ENCODE measurements at regions of chr3 and their contacts with region 1.

Region 1: DNA sequence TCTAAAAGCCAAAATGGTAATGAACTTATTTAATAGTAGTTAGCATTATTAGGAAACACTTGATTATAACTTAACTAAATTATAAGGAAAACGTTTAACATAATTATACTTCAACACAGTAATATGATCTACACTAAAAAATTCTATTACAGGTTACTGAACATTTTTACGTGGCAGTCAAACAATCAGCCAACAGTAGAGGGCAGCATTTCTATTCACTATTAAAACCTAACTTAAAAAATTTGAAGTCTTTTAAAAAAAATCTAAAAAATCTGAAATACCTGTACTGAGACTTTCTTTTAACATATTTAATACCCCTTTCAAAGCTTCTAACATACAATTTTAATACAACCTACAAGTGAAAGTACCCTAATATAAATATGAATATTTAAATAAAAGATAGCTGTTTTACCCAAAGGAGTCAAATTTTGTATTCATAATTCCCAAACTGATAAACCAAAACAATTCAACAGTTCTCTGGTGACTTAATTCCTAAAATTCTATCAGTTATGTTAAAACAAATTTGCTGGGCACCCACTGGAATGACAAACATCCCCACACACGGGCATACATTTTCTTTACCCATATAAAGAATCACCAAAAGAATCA is 41.5 kb downstream of the DLG1 start:
- DNase-seq: peak; percentile 59
- H3K4me3 Mint-ChIP-seq: no peak overlapping the region
- H3K27ac Mint-ChIP-seq: no peak overlapping the region
- H3K4me1 Mint-ChIP-seq: peaks cover 15% of the 10 kb centered on the region
- H3K27me3 Mint-ChIP-seq: no peaks in the 10 kb centered on the region
- CTCF ChIP-seq: peak; percentile 58

Region 2: GRCh38 chr3:197234947-197235914 is 21.7 kb before region 1 on chr3:
- CTCF ChIA-PET with region 1: interaction called, 27 read pairs
- POLR2A ChIA-PET with region 1: interaction called, 4 read pairs
- intact Hi-C with region 1: no loop called
- DNase-seq: peak; percentile 27
- H3K4me3 Mint-ChIP-seq: no peak overlapping the region
- H3K27ac Mint-ChIP-seq: peak overlapping the region; percentile 16
- H3K4me1 Mint-ChIP-seq: peaks cover 26% of the 10 kb centered on the region
- H3K27me3 Mint-ChIP-seq: no peaks in the 10 kb centered on the region
- CTCF ChIP-seq: no peak

Region 3: DNA sequence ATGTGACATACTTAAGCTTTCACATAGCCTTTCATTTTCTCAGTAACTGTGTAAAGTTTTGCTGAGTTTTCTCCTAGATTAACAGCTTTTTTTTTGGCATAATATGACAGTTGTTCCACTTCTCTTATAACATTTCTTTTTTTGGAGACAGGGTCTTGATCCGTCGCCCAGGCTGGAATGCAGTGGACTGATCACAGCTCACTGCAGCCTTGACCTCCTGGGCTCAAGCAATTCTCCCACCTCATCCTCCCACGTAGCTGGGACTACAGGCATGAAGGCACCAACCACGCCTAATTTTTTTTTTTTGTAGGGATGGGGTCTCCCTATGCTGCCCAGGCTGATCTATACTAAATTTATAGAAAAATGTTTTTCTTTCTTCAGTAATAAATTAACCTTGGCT is 11.4 kb after region 1 on chr3:
- CTCF ChIA-PET with region 1: interaction called, 45 read pairs
- POLR2A ChIA-PET with region 1: interaction called, 3 read pairs
- intact Hi-C with region 1: no loop called
- DNase-seq: no peak
- H3K4me3 Mint-ChIP-seq: no peak overlapping the region
- H3K27ac Mint-ChIP-seq: no peak overlapping the region
- H3K4me1 Mint-ChIP-seq: peaks cover 26% of the 10 kb centered on the region
- H3K27me3 Mint-ChIP-seq: no peaks in the 10 kb centered on the region
- CTCF ChIP-seq: no peak

Region 4: DNA sequence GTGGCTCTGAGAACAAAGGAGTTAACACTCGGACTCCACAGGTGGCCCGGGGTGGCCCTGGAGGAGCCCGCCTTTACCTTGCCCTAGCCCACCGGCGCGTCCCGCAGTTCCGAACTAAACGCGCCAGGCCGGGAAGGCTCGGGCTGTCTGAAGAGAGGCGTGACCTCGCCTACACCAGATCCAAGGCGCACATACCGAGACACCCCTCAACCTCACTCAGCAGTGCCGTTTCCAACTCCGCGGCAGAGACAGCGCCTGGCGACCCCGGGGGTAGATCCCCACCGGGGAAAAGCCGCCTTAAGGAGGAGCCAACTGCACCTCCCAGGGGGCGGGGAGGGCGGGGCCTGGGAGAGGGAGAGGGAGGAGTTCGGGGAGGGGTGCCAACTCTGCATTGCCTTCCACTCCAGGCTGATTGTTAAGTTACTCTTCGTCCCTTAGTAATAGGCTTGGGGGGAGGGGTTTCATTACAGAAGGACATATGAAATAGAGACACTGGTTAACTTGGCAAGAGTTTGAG is 41.5 kb after region 1 on chr3 and contains the start of gene DLG1:
- CTCF ChIA-PET with region 1: interaction called, 9 read pairs
- POLR2A ChIA-PET with region 1: interaction called, 11 read pairs
- intact Hi-C with region 1: no loop called
- DNase-seq: peak; percentile 98
- H3K4me3 Mint-ChIP-seq: peak within 1 kb of the TSS; percentile 94
- H3K27ac Mint-ChIP-seq: peak within 1 kb of the TSS; percentile 97
- H3K4me1 Mint-ChIP-seq: peaks cover 14% of the 10 kb centered on the region
- H3K27me3 Mint-ChIP-seq: no peaks in the 10 kb centered on the region
- CTCF ChIP-seq: no peak
- total RNA-seq, gene DLG1: 121 and 129 TPM in 2 replicates

Region 5: GRCh38 chr3:197456261-197457091 is 199.5 kb after region 1 on chr3:
- CTCF ChIA-PET with region 1: interaction called, 11 read pairs
- POLR2A ChIA-PET with region 1: interaction called, 8 read pairs
- intact Hi-C with region 1: loop called (anchors 1 kb)
- DNase-seq: peak; percentile 85
- H3K4me3 Mint-ChIP-seq: peak overlapping the region; percentile 72
- H3K27ac Mint-ChIP-seq: peak overlapping the region; percentile 91
- H3K4me1 Mint-ChIP-seq: peaks cover 11% of the 10 kb centered on the region
- H3K27me3 Mint-ChIP-seq: no peaks in the 10 kb centered on the region
- CTCF ChIP-seq: no peak

Region 6: DNA sequence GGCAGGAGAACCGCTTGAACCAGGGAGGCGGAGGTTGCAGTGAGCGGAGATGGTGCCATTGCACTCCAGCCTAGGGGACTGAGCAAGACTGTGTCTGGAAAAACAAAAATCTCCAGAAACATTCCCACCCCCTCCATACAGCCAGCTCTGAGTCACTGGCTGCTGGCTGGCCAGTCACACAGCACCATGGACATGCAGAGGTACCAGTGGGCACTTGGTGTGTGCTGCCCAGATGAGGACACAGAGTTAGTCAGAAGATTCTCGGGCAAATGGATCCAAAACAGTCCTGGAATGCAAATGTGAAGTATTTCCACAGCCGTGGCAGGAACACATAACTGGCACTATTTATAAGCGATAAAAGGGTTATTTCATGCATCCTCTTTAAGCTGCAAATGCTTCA is 254.2 kb after region 1 on chr3:
- CTCF ChIA-PET with region 1: interaction called, 113 read pairs
- POLR2A ChIA-PET with region 1: interaction called, 4 read pairs
- intact Hi-C with region 1: no loop called
- DNase-seq: peak; percentile 52
- H3K4me3 Mint-ChIP-seq: no peak overlapping the region
- H3K27ac Mint-ChIP-seq: no peak overlapping the region
- H3K4me1 Mint-ChIP-seq: peaks cover 3% of the 10 kb centered on the region
- H3K27me3 Mint-ChIP-seq: no peaks in the 10 kb centered on the region
- CTCF ChIP-seq: no peak

Measured in MCF 10A (cell line).